GM10248 (cell line): ENCODE measurements at regions of chr12 and their contacts with region 1.

Region 1: DNA sequence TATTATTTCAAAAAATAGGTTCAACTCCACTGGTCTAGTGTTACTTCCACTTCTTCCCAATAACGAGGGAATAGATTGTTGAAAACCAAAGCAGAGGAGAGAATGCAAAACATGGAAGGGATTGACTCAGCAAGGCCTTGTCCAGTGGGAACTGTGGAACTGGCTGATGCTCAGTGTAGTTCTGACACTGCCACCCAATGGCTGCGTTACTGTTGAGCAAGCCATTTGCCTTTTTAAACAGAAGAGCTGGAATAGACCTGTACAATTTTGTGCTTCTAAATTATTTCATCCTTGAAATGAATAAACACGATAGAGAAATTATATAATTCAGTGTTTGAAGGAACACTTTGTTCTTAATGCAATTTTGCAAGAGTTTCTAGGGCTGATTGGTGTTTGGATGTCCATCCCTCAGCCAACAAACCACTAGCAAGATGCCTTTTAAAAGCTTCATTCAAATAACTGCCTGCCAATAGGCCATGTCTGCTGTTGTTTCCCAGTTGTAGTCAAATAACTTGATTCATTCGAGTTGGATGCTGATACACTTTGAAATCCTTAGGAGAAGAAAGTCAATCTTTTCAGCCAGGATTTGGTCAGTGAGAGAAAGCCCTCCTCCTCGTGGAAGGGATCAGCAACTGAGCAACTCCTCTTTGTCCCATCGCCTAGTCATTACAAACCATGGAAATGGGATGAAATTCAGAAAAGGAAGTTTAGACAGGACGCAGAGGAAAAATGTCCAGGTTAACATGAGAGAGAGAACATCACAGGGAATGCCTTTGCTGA is 7.3 kb upstream of the MGP start:
- DNase-seq: no peak
- CTCF ChIP-seq: no peak

Region 2: GRCh38 chr12:14175206-14175605 is 717.7 kb before region 1 on chr12:
- CTCF ChIA-PET with region 1: no interaction called
- POLR2A ChIA-PET with region 1: no interaction called
- DNase-seq: no peak
- CTCF ChIP-seq: no peak

Region 3: GRCh38 chr12:14774066-14774905 is 118.6 kb before region 1 on chr12:
- CTCF ChIA-PET with region 1: no interaction called
- POLR2A ChIA-PET with region 1: no interaction called
- DNase-seq: peak; percentile 92
- CTCF ChIP-seq: no peak

Region 4: DNA sequence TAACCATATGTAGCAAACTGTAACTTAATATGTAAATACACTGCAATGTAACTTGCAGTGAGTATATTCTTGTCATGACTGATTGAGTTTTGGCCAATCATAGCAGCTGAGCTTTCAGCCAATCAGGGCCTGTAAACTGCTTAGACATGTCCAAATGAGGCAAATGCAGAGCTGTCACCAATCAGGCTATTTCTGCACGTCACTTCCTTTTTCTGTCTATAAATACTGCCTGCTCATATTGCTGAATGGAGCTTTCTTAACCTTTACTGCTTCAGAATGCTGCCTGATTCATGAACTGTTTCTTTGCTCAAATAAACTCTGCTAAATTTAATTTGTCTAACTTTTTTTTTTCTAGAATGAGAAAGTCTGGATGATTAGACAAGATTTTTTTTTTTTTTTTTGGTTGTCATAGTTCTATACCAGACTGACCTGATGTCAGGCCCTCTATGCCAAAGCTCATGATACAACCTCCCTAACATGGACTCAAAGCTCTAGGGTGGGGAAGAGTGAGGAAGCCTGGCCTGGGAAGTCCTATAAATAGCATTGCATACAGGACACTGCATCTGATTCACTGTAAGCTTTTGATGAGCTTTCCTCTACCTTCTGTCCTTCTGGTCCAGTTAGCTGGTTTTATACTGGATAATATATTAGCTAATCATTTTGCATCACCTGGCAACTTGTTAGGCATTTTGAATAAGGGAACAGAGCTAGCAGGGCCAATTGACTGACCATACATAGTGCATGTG is 19.3 kb before region 1 on chr12:
- CTCF ChIA-PET with region 1: interaction called, 13 read pairs
- POLR2A ChIA-PET with region 1: no interaction called
- DNase-seq: no peak
- CTCF ChIP-seq: no peak

Region 5: GRCh38 chr12:14910090-14910915 is 17.4 kb after region 1 on chr12:
- CTCF ChIA-PET with region 1: interaction called, 14 read pairs
- POLR2A ChIA-PET with region 1: no interaction called
- DNase-seq: no peak
- CTCF ChIP-seq: no peak